ENCODE measurements at regions of chr15 and their contacts with region 1.

Region 1: GRCh38 chr15:70466895-70467529 is 296.3 kb downstream of the UACA start:
- DNase-seq: peak; percentile 54
- ATAC-seq: peak; percentile 93
- H3K4me3 ChIP-seq: no peak overlapping the region
- H3K27ac ChIP-seq: no peak overlapping the region
- H3K4me1 ChIP-seq: peaks cover 2% of the 10 kb centered on the region
- H3K27me3 ChIP-seq: peaks cover 62% of the 10 kb centered on the region
- CTCF ChIP-seq: peak; percentile 61
- POLR2A ChIP-seq: no peak
- RAD21 ChIP-seq: peak; percentile 66

Region 2: GRCh38 chr15:69475769-69476358 is 991.1 kb before region 1 on chr15:
- CTCF ChIA-PET with region 1: interaction called, 3 read pairs
- POLR2A ChIA-PET with region 1: no interaction called
- dilution Hi-C with region 1: no loop called
- in situ Hi-C with region 1: no loop called
- intact Hi-C with region 1: loop called (anchors 5 kb)
- DNase-seq: peak; percentile 63
- ATAC-seq: peak; percentile 93
- H3K4me3 ChIP-seq: no peak overlapping the region
- H3K27ac ChIP-seq: no peak overlapping the region
- H3K4me1 ChIP-seq: peaks cover 9% of the 10 kb centered on the region
- H3K27me3 ChIP-seq: peaks cover 11% of the 10 kb centered on the region
- CTCF ChIP-seq: peak; percentile 92
- POLR2A ChIP-seq: no peak
- RAD21 ChIP-seq: peak; percentile 94

Region 3: DNA sequence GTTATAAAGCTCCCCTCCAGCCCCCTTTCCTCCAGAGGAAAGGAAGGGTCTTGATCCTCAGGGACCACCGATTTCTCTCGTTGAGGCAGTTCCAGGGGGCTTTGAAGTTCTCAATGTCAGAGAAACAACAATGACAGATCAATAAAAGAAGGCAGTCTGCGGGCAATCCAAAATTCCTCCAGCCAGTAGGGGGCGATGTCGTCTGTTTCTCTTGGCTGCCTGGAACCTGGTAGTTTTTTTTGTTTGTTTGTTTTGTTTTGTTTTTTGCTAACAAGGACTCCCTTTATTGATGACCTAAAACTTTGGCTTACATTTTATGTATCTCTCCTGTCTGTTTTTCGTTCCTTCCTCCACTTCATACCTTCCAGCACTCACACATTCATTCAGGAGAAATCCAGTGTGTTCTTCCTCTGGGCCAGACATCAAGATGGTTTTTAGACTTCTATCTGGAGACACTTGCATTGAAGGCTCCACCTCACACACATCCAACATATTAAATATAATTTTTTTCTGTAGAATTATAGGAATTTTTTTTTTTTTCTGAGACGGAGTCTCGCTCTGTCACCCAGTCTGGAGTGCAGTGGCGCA is 737.8 kb before region 1 on chr15:
- CTCF ChIA-PET with region 1: no interaction called
- POLR2A ChIA-PET with region 1: no interaction called
- dilution Hi-C with region 1: no loop called
- in situ Hi-C with region 1: no loop called
- intact Hi-C with region 1: loop called (anchors 5 kb)
- DNase-seq: peak; percentile 8
- ATAC-seq: no peak
- H3K4me3 ChIP-seq: no peak overlapping the region
- H3K27ac ChIP-seq: no peak overlapping the region
- H3K4me1 ChIP-seq: no peaks in the 10 kb centered on the region
- H3K27me3 ChIP-seq: peaks cover 56% of the 10 kb centered on the region
- CTCF ChIP-seq: peak; percentile 73
- POLR2A ChIP-seq: no peak
- RAD21 ChIP-seq: peak; percentile 79

Region 4: DNA sequence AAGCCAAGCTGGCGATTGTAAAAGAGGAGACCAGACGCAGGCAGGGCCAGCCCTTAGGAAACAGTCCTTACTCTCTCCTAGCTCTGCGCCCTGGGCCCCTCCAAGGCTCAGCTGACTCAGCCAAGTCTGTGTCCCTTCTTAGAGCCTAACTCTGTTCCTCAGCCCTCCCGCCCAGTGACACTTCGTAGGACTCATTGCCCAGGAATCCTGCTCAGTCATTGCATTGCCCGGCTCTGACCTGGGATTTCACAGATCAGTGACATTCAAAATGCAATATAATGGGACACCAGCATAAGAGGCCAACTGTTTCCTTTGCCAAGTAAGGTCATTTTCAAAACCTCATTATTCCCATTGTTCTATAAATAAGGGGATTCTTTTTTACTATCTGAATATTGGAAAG is 613.4 kb before region 1 on chr15:
- CTCF ChIA-PET with region 1: no interaction called
- POLR2A ChIA-PET with region 1: no interaction called
- dilution Hi-C with region 1: no loop called
- in situ Hi-C with region 1: no loop called
- intact Hi-C with region 1: loop called (anchors 10 kb)
- DNase-seq: peak; percentile 84
- ATAC-seq: peak; percentile 71
- H3K4me3 ChIP-seq: no peak overlapping the region
- H3K27ac ChIP-seq: peak overlapping the region; percentile 73
- H3K4me1 ChIP-seq: peaks cover 24% of the 10 kb centered on the region
- H3K27me3 ChIP-seq: no peaks in the 10 kb centered on the region
- CTCF ChIP-seq: no peak
- POLR2A ChIP-seq: peak; percentile 34; the same call in 1 of the 2 replicates
- RAD21 ChIP-seq: 0 out of 2 replicates have a peak, but pooled peaks have one; percentile 5

Region 5: GRCh38 chr15:69951907-69952555 is 515.0 kb before region 1 on chr15:
- CTCF ChIA-PET with region 1: no interaction called
- POLR2A ChIA-PET with region 1: no interaction called
- dilution Hi-C with region 1: no loop called
- in situ Hi-C with region 1: no loop called
- intact Hi-C with region 1: no loop called
- DNase-seq: peak; percentile 13
- ATAC-seq: peak; percentile 69
- H3K4me3 ChIP-seq: no peak overlapping the region
- H3K27ac ChIP-seq: no peak overlapping the region
- H3K4me1 ChIP-seq: peaks cover 3% of the 10 kb centered on the region; the same call in 1 of the 2 replicates
- H3K27me3 ChIP-seq: peaks cover 37% of the 10 kb centered on the region
- CTCF ChIP-seq: no peak
- POLR2A ChIP-seq: no peak
- RAD21 ChIP-seq: no peak

Region 6: DNA sequence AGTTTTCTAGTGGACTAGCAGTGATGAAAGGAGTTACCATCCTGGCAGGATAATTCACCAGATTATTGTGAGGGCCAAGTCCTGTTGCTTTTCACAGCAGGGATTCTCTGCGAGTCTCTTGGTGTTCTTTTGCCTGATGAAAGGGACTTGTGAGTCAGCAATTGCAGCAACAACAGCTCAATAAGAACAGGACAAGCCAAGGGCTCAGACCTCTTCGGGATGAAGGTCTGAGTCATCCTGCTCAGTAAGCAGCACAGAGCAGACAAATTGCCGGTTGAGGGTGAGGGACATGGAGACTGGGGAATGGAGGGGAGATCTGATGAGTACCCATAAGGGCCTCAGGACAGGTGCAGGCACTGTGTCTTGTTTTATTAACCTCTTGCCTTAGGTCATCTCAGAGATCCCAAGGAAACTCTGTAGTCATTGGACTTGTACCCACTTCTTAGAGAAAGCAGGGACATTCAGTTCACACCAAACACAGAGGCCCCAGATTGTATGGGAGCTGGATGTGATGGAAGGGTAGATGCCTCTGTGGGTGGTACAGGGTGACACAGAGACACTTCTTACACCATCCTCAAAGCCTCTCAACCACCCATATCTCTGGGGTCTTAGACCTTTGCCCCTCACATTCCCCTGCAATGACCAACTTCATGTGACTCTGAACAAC is 195.5 kb before region 1 on chr15:
- CTCF ChIA-PET with region 1: no interaction called
- POLR2A ChIA-PET with region 1: no interaction called
- dilution Hi-C with region 1: no loop called
- in situ Hi-C with region 1: no loop called
- intact Hi-C with region 1: loop called (anchors 10 kb)
- DNase-seq: peak; percentile 95
- ATAC-seq: peak; percentile 98
- H3K4me3 ChIP-seq: no peak overlapping the region
- H3K27ac ChIP-seq: no peak overlapping the region
- H3K4me1 ChIP-seq: peaks cover 5% of the 10 kb centered on the region; the same call in 1 of the 2 replicates
- H3K27me3 ChIP-seq: peaks cover 24% of the 10 kb centered on the region
- CTCF ChIP-seq: no peak
- POLR2A ChIP-seq: no peak
- RAD21 ChIP-seq: 0 out of 2 replicates have a peak, but pooled peaks have one; percentile 8

Region 7: GRCh38 chr15:70451821-70452653 is 15.0 kb before region 1 on chr15:
- CTCF ChIA-PET with region 1: interaction called, 12 read pairs
- POLR2A ChIA-PET with region 1: no interaction called
- dilution Hi-C with region 1: no loop called
- in situ Hi-C with region 1: no loop called
- intact Hi-C with region 1: no loop called
- DNase-seq: no peak
- ATAC-seq: no peak
- H3K4me3 ChIP-seq: no peak overlapping the region
- H3K27ac ChIP-seq: no peak overlapping the region
- H3K4me1 ChIP-seq: no peaks in the 10 kb centered on the region
- H3K27me3 ChIP-seq: peaks cover 42% of the 10 kb centered on the region
- CTCF ChIP-seq: no peak
- POLR2A ChIP-seq: no peak
- RAD21 ChIP-seq: no peak

Region 8: DNA sequence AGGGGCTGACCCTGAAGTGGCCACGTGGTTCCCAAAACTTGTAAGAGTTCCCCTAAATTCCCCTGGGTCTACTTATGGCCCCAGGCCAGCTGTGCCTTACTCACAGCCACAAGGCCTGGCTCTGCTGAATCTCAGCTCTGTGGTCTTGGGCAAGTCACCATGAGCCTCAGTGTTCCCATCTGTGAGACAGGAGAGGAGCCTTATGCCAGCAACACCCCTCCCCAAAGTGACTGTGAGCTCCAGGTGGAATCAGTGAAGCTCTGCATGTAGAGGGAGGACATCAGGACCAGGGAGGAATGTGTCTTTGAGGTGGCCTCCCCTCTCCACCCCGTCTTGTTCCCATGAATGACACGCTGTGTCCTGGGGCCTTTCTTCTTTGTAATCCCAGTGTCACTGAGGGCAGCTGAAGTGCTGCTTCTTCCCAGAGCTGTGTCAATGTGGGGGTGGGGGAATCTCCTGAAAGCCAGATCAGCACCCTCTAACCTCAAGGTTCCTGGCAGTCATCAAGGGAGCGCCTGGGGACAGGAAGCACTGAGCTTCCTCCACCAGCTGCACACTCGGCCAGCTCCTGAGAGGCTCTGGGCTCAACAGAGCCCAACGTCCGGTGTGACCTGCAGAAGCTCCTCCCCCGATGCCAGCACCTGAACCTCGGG is 37.4 kb after region 1 on chr15:
- CTCF ChIA-PET with region 1: no interaction called
- POLR2A ChIA-PET with region 1: no interaction called
- dilution Hi-C with region 1: no loop called
- in situ Hi-C with region 1: no loop called
- intact Hi-C with region 1: no loop called
- DNase-seq: peak; percentile 55
- ATAC-seq: peak; percentile 8; the same call in 1 of the 2 replicates
- H3K4me3 ChIP-seq: no peak overlapping the region
- H3K27ac ChIP-seq: no peak overlapping the region
- H3K4me1 ChIP-seq: peaks cover 27% of the 10 kb centered on the region
- H3K27me3 ChIP-seq: peaks cover 15% of the 10 kb centered on the region
- CTCF ChIP-seq: no peak
- POLR2A ChIP-seq: no peak
- RAD21 ChIP-seq: no peak

Measured in IMR-90 (cell line).